Activated naive CD4-positive, alpha-beta T cell treated with anti-CD3 and anti-CD28 coated beads for 36 hours (primary cell): ENCODE measurements at regions of chr22 and their contacts with region 1.

Region 1: DNA sequence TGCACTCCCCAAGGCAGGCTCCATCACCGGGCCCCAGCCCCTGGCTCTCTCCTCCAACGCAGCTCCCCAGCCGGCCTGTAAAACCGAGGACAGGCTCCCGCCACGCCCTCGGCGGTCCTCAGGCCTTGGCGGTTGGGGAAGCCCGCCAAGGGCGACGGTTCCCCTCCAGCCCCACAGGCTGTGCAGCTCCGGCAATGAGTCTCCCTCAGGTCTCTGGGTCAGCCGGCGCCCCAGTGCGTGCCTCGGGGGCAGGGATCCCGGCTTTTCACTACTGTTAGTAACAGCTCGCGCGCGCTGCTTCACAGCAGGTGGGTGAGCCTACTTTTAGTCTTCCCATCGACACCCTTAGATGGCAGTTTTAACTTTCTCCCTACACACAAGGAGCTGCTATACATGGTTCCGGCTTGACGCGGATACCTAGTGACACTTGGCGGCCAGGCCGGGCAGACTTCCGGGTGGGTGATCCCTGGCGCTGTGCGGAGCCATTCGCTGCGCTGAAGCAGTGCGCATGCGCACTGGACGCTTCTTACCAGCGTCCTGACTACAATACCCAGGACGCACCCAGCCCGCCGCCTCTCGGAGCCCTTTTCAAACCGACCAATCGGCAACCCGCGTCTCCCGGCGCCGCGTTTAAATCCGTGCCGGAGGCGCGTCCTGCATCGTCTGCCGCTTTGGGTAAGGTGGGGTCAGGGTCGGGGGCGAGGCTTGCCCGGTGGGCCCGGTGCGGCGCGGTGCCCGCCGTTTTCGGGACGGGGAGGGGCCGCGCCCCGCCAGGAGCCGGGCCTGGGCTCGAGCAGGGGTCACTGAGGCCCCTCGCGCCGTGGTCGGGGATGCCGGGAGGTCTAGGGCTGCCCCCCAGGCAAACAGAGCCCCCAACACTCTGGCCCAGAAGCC is at the start of gene GTSE1:
- DNase-seq: peak; percentile 99
- H3K4me3 Mint-ChIP-seq: peak within 1 kb of the TSS; percentile 93
- H3K27ac Mint-ChIP-seq: peak within 1 kb of the TSS; percentile 90
- H3K4me1 Mint-ChIP-seq: peaks cover 25% of the 10 kb centered on the region
- H3K27me3 Mint-ChIP-seq: peaks cover 7% of the 10 kb centered on the region
- total RNA-seq, gene GTSE1: 39.7 to 39.8 TPM

Region 2: DNA sequence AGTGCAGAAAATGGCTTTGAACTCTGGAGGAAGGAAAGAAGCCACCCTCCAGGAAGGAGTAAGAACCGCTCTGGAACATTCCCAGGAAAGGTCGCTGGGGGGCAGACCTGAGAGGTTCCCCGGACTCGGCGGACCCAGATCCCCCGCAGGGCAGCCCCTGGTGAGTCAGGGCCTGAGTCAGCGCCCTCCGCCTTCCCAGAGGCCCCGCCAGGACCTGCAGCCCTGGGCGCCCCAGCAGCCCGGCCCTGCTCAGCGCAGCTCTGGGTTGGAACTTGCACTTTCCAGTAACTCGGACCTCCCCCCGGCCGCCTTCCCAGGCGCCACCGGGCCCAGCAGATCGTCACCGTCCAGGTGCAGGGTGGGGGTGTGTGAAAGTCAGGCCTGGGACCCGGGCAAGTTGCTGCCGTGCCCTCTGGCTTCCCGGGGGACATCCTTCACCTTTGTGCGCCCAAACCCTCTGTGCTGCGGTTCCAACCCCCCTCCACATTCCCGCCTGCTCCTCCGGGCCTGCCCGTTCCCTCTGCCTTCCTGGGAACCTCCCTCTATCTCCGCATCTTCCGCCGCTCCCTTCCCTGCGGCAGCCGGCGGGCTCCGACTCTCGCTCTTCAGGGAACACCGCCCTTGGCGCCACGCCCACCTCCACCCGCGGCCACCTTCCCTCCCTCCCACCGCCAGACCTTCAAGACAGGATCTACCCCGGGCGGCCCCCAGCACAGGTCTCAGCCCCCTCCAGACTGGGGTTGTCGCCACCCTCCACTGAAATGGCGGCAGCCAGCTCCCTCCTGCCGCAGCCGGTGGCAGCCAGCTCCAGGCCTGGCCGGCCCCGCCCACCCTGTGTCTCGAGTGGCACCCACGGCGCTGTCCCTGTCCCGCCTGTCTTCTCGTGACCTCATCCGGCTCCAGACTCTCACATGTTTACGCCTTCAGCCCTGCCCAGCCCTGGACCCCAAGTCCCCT is 282.8 kb before region 1 on chr22:
- CTCF ChIA-PET with region 1: no interaction called
- intact Hi-C with region 1: loop called (anchors 2 kb)
- DNase-seq: peak; percentile 97
- H3K4me3 Mint-ChIP-seq: peak overlapping the region; percentile 81
- H3K27ac Mint-ChIP-seq: peak overlapping the region; percentile 83
- H3K4me1 Mint-ChIP-seq: peaks cover 5% of the 10 kb centered on the region
- H3K27me3 Mint-ChIP-seq: no peaks in the 10 kb centered on the region

Region 3: GRCh38 chr22:46071451-46072109 is 224.9 kb before region 1 on chr22:
- CTCF ChIA-PET with region 1: no interaction called
- intact Hi-C with region 1: loop called (anchors 2 kb)
- DNase-seq: peak; percentile 76
- H3K4me3 Mint-ChIP-seq: peak overlapping the region; percentile 83
- H3K27ac Mint-ChIP-seq: peak overlapping the region; percentile 87
- H3K4me1 Mint-ChIP-seq: peaks cover 49% of the 10 kb centered on the region
- H3K27me3 Mint-ChIP-seq: no peaks in the 10 kb centered on the region

Region 4: GRCh38 chr22:46150655-46151477 is 145.6 kb before region 1 on chr22:
- CTCF ChIA-PET with region 1: interaction called, 3 read pairs
- intact Hi-C with region 1: loop called (anchors 1 kb)
- DNase-seq: peak; percentile 65
- H3K4me3 Mint-ChIP-seq: peak overlapping the region; percentile 76
- H3K27ac Mint-ChIP-seq: no peak overlapping the region
- H3K4me1 Mint-ChIP-seq: peaks cover 10% of the 10 kb centered on the region
- H3K27me3 Mint-ChIP-seq: peaks cover 8% of the 10 kb centered on the region

Region 5: DNA sequence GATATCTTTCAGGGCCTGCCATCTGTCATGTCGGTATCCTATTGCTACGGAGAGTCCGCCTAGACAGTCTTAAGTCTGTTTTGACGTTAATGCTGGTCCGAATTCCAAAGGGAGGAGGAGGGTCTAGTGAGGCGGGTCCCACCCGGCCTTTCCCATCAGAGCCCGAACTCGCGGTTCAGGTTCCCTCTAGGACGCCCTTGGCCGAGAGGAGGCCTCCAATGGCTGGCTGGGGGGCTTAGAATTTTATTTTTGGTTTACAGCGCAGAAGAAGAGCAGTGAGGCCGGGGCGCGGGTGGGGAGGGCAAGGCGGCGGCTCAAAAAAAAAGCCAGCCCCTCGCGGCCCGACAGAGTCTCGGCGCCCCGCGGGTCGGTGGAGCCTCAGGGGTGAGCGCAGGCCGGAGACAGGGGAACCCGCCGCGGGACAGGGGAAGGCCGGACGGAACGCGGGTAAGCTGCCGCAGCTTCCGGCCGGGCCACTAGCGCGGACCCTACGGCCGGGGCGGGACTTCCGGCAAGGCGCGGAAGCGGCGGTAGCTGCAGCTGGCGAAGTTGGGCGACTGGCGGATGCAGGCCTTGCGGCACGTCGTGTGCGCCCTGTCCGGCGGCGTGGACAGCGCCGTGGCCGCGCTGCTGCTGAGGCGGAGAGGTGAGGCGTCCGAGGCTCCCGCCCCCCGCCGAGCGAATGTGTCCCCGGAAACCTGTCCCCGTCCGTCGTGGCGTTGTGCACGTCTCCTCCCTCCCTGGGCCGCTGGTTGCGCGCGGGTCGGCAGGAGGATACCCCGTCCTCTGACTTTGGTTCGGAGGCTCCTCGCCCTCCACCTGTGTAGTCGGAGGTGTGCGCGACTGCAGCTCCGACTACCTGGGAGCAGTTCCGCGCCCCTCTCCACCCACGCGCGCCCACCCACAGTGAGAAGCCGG is 39.0 kb after region 1 on chr22 and contains the start of gene TRMU:
- CTCF ChIA-PET with region 1: interaction called, 4 read pairs
- intact Hi-C with region 1: loop called (anchors 2 kb)
- DNase-seq: peak; percentile 74
- H3K4me3 Mint-ChIP-seq: peak within 1 kb of the TSS; percentile 93
- H3K27ac Mint-ChIP-seq: peak within 1 kb of the TSS; percentile 85
- H3K4me1 Mint-ChIP-seq: peaks cover 32% of the 10 kb centered on the region
- H3K27me3 Mint-ChIP-seq: no peaks in the 10 kb centered on the region
- total RNA-seq, gene TRMU: 57.4 TPM